ENCODE measurements at regions of chr9 and their contacts with region 1.

Region 1: DNA sequence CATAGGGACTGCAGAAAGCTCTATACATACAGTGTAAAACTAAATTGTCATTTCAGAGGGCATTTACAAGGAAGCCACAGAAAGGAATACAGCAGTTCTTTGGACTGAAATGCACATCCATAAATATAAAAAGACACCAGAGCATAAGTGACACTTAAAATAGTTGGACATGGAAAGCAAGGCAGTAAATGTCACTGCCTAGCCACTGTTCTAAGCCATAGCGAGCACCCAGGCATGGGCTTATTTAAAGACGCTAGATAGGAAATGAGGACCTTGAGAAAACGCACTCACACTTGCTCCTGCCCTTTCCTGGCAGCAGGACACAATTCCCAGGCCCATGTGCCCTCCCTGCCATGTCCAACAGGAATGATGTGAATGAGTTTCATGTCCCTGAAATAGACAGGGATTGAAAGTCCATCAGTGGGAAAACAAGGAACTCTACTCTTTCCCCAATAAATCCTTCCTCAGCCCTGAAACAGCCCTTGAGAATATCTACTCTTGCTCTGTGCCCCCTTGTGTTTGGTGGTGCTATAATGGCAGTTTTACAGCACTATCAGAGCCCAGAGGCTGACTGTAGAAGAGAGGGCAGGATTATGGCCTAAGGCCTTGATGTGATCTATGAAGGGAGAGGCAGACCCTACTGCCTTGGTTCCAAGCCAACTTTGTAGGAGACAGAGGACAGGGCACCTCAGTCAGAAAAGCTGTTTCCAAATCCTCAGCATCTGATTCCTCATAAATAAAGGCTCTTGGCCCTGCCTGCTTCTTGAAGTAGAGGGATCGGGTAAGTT is 182.9 kb downstream of the SAXO1 start:
- DNase-seq: no peak
- H3K4me3 ChIP-seq: no peak overlapping the region
- H3K27ac ChIP-seq: no peak overlapping the region
- H3K4me1 ChIP-seq: peaks cover 0 to 28% (median 16%) of the 10 kb centered on the region in 4 donors
- H3K27me3 ChIP-seq: no peaks in the 10 kb centered on the region
- CTCF ChIP-seq: no peak
- EP300 ChIP-seq: no peak
- POLR2A ChIP-seq: no peak

Region 2: DNA sequence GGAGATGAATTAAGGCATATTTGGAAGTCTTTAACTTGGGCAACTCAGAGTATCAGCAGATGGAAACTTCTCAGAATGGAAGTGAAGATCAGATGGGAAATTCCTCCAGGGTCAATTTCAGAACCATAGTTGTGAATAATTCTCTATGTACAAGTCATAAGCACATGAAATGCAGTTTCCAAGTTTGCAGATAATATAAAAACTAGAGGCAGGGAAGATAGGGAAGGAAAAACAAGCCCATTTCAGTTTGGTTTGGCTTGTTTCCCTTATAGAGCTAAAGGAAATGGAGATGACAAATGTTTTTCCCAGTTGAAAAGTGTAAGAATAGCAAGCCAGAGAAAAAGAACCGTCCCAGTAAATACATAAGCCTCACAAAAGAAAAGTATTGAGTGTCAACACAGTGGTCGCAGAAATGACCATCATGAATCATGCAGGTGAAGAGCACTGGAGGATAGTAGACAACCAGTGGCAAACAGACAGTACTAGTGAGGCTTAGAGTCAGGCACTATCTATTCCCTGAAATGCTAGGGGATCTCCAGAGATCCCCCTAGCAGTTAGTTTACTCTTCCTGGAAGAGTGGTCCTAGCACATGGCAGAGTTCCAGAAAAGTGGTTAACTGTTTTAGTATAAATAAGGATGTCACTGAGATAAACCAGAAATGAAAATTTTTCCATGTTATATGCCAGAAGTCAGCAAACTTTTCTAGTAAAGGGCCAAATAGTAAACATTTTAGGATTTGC is 63.0 kb before region 1 on chr9:
- intact Hi-C with region 1: loop called (anchors 10 kb)
- DNase-seq: no peak
- H3K4me3 ChIP-seq: no peak overlapping the region
- H3K27ac ChIP-seq: peak overlapping the region; percentile 20 to 56 (median 46)
- H3K4me1 ChIP-seq: peaks cover 0 to 26% (median 21%) of the 10 kb centered on the region in 4 donors
- H3K27me3 ChIP-seq: no peaks in the 10 kb centered on the region
- CTCF ChIP-seq: no peak
- EP300 ChIP-seq: no peak
- POLR2A ChIP-seq: no peak

Region 3: GRCh38 chr9:18888290-18888689 is 38.2 kb after region 1 on chr9:
- intact Hi-C with region 1: no loop called
- DNase-seq: no peak
- H3K4me3 ChIP-seq: no peak overlapping the region
- H3K27ac ChIP-seq: no peak overlapping the region
- H3K4me1 ChIP-seq: peaks cover 0 to 10% (median 7%) of the 10 kb centered on the region in 4 donors
- H3K27me3 ChIP-seq: no peaks in the 10 kb centered on the region
- CTCF ChIP-seq: no peak
- EP300 ChIP-seq: no peak
- POLR2A ChIP-seq: no peak

Region 4: GRCh38 chr9:19048966-19049916 is 199.2 kb after region 1 on chr9 and contains the start of gene RRAGA:
- intact Hi-C with region 1: no loop called
- DNase-seq: peak; percentile 97
- H3K4me3 ChIP-seq: peak within 1 kb of the TSS; percentile 76 to 89 (median 82)
- H3K27ac ChIP-seq: peak within 1 kb of the TSS; percentile 96 to 98 (median 96)
- H3K4me1 ChIP-seq: peaks cover 0 to 41% (median 37%) of the 10 kb centered on the region in 4 donors
- H3K27me3 ChIP-seq: no peaks in the 10 kb centered on the region
- CTCF ChIP-seq: peak; percentile 62 to 84 (median 84)
- EP300 ChIP-seq: peak in 1 of 4 donors; percentile 17
- POLR2A ChIP-seq: peak; percentile 74 to 76
- total RNA-seq, gene RRAGA: 53.4 to 65.2 (median 59.9) TPM

Measured in sigmoid colon (tissue), 7 donors.